Right ventricle myocardium superior (tissue), 1 donor: ENCODE measurements at regions of chr15 and their contacts with region 1.

Region 1: GRCh38 chr15:35444557-35445204 is 101.3 kb downstream of the DPH6 start:
- DNase-seq: no peak
- ATAC-seq: peak; percentile 53

Region 2: GRCh38 chr15:35078221-35078915 is 366.3 kb before region 1 on chr15:
- intact Hi-C with region 1: loop called (anchors 10 kb)
- DNase-seq: no peak
- ATAC-seq: peak; percentile 68

Region 3: GRCh38 chr15:35289024-35289617 is 155.6 kb before region 1 on chr15:
- intact Hi-C with region 1: loop called (anchors 2 kb)
- DNase-seq: no peak
- ATAC-seq: peak; percentile 85

Region 4: DNA sequence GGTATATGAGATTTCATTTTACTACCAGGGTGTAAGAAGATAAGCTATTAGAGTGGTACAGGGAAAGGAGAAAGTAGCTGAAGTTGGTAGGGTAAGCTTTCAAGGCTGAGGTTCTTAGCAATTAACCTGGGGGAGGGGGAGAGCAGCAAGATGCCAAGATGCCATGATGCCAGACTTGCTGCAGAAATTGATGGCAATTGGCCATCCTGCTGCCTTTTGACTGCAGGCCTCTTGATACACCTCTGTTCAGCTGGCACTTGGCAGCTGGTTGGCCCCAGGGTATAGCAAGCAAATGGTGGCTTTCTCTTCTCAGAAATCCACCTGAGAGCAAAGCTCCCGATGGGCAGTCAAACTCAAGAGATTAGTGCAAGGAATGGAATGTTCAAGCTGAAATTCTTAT is 122.7 kb after region 1 on chr15:
- intact Hi-C with region 1: no loop called
- DNase-seq: no peak
- ATAC-seq: peak; percentile 46